ENCODE measurements at regions of chr1 and their contacts with region 1.

Region 1: DNA sequence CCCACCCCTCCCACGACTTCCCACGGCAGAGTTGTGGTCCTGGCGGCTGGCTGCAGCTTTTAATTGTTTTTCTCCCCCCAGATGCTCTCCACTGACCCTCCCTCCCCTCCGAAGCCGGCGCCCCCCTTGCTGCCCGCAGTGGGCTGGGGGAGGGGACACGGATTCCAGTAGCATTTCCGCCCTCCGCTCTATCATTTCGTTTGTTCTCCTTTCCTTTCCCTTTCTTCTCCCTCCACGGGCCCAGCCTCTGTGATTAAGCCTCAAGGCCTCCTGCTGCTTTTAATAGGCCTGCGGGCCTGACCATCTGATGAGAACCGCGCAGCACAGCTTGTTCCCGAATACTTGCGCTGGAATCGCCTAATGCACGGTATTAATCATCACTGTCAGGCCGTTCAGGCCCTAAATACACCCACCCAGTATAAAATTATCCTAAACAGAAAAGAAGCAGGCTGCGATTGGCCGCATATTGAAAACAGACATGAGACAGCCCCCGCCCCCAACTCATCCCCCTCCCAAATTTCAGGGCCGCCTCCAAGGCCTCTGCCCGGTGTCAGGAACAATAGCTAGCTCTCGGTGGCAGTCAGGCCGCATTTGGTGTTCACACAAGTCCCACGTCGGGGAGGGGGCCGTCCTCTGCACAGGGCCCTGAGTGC is 102.0 kb upstream of the ARHGEF16 start:
- DNase-seq: peak; percentile 35
- H3K4me3 ChIP-seq: no peak overlapping the region
- H3K27ac ChIP-seq: peak overlapping the region; percentile 59 to 77
- H3K4me1 ChIP-seq: peaks cover 11% of the 10 kb centered on the region
- H3K27me3 ChIP-seq: peaks cover 11% of the 10 kb centered on the region
- CTCF ChIP-seq: no peak
- POLR2A ChIP-seq: no peak

Region 2: DNA sequence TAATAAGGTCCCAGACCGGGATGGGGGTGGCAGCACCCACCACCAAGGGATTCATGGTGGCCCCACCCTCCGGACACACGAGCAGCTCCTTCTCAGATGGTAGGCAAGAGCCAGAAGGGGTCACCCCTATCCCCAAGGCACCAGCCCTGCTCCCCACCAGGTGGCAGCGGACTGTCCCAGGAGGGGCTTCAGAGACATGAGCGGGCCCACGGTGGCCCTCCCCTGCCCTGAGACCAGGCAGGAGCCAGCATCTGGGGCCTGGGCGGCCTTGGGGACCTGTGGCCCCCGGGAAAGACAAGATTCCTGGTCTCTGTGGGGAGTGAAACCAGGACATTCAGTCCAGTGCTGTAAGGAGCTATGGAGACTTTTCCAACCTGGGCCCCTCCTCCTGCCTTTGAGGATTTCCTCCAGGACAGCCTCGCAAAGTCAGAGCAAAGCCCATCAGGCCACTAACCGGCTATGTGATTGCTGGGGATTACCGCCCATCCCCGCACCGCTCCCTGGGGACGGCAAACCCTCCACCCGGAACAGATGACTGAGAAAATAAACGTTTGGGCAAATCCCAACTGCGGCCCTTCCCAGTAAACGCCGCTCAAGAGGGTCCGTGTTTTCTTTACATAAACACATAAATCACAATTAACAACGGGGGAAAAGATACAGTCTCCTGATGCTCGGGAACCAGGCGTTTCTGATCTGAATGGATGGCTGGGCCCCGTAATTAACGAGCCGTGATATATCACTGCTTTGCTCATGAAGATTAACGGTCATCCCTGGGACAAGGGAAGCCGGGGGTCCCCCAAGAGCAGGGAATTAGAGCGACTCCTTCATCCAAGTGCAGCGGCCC is 51.2 kb after region 1 on chr1:
- intact Hi-C with region 1: loop called (anchors 5 kb)
- DNase-seq: no peak
- H3K4me3 ChIP-seq: no peak overlapping the region
- H3K27ac ChIP-seq: no peak overlapping the region
- H3K4me1 ChIP-seq: peaks cover 4% of the 10 kb centered on the region
- H3K27me3 ChIP-seq: peaks cover 29% of the 10 kb centered on the region
- CTCF ChIP-seq: no peak
- POLR2A ChIP-seq: no peak